Activated naive CD4-positive, alpha-beta T cell treated with anti-CD3 and anti-CD28 coated beads, Interleukin-2, amount 10 ng/mL, durations not matched to agents 7 days and 5 days (primary cell): ENCODE measurements at regions of chr18 and their contacts with region 1.

Region 1: GRCh38 chr18:48663931-48664847 is 125.4 kb downstream of the CTIF start:
- DNase-seq: peak; percentile 64
- H3K4me3 Mint-ChIP-seq: no peak overlapping the region
- H3K27ac Mint-ChIP-seq: no peak overlapping the region
- H3K4me1 Mint-ChIP-seq: no peaks in the 10 kb centered on the region
- H3K27me3 Mint-ChIP-seq: peaks cover 7% of the 10 kb centered on the region

Region 2: DNA sequence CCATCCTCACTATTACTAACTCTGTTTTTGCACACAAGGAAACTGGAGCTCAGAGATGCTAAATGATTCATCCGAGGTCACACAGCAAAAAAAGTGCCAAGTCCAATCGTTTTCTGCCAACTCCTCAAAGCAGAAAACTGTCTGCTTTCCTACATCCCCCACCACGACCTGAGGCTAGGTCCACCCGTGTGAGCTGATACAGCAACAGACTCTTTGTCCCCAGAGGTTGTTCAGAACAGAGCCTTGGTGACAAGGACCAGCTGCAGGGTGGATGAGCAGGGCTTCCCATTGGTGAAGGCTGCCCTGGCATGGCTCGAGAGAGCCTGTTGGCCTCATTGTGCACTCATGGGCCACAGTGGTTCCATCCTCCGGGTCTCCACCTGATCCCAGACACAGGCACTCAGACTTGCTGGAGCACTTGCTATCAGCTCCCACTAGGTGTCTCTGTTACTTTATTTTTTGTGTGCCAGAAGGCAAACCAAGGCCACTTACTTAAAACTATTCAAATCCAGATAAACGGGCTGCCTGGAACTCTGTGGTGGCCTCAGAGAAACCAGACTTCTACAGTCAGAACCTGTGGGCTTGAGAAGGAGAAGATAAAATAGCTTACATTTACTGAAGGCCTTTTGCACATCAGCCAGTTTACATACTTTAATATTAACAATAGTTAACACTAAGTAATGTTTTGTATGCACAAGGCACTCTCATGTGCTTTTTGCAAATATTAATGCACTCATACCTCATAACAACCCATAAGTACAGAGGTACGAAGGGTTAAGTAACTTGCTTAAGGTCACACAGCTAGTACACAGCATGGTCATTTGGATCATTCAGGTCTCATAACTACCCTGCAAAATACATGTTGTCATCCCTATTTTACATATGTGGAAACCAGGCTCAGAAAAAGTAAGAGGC is 188.3 kb before region 1 on chr18:
- CTCF ChIA-PET with region 1: interaction called, 13 read pairs
- DNase-seq: peak; percentile 38
- H3K4me3 Mint-ChIP-seq: no peak overlapping the region
- H3K27ac Mint-ChIP-seq: no peak overlapping the region
- H3K4me1 Mint-ChIP-seq: no peaks in the 10 kb centered on the region
- H3K27me3 Mint-ChIP-seq: peaks cover 39% of the 10 kb centered on the region

Region 3: GRCh38 chr18:48502906-48503305 is 161.3 kb before region 1 on chr18:
- CTCF ChIA-PET with region 1: no interaction called
- DNase-seq: no peak
- H3K4me3 Mint-ChIP-seq: no peak overlapping the region
- H3K27ac Mint-ChIP-seq: no peak overlapping the region
- H3K4me1 Mint-ChIP-seq: no peaks in the 10 kb centered on the region
- H3K27me3 Mint-ChIP-seq: peaks cover 11% of the 10 kb centered on the region

Region 4: GRCh38 chr18:48742706-48743475 is 78.7 kb after region 1 on chr18:
- CTCF ChIA-PET with region 1: no interaction called
- DNase-seq: no peak
- H3K4me3 Mint-ChIP-seq: no peak overlapping the region
- H3K27ac Mint-ChIP-seq: no peak overlapping the region
- H3K4me1 Mint-ChIP-seq: no peaks in the 10 kb centered on the region
- H3K27me3 Mint-ChIP-seq: peaks cover 10% of the 10 kb centered on the region